ENCODE measurements at regions of chr10 and their contacts with region 1.

Region 1: DNA sequence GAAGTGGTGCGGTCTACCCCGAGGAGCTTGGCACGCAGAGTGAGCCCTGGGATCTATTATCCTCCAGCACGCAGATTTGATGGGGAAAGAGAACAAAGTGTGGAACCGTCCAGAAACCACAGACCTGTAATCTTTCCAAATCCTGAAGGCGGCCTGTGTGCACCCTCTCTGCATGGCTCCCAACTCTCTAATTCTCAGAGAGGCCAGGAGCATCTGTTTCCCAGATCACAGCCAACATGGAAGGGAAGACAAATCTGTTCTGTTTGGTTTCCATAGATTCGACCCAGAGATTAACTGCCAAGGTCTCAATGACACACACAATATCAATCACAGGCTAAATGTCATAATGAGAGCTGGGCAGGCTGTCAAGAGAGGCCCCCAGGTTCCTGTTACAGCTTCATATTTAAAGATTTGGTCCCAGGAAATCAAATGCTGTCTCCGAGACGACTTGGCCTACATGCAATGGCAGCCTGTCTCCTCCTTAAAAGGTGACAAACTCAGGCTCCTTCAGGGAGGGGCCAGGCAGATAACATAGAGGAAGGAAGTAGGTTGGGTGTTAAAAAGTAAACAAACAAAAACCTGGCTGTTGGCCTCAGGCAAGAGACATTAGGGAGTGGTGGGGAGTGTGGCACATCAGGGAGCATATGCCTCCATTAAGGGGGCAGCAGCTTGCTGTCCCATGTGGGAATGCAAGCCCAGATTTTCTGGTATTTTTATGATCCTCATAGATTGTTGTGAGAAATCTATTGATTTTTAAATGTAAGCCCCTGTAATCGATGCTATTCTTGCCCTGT is 48.8 kb upstream of the SAMD8 start:
- DNase-seq: no peak
- H3K4me3 ChIP-seq: no peak overlapping the region
- H3K27ac ChIP-seq: no peak overlapping the region
- H3K27me3 ChIP-seq: no peaks in the 10 kb centered on the region
- CTCF ChIP-seq: no peak

Region 2: DNA sequence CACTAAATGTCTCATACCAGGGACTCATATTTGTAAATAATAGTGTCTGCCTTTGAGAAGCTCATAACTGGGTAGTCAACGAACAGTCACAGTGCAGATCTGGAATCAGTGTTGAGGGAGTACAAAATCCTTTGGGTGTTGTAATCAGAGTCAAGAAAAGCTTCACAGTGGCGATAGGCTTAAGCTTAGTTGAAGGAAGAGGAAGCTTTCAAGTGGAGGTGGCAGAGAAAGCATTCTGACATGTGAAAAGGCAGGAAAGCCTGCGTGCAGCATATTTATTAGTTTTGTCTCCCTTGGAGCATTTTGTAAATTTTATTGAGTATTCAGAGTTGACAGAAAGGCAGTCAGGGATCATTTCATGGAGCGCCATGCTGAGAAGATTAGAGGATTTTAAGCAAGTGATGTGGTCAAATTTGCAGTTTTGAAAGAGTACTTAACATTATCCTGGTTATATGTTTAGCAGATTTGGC is 806.8 kb before region 1 on chr10:
- in situ Hi-C with region 1: loop called (anchors 25 kb)
- DNase-seq: no peak
- H3K4me3 ChIP-seq: no peak overlapping the region
- H3K27ac ChIP-seq: no peak overlapping the region
- H3K27me3 ChIP-seq: no peaks in the 10 kb centered on the region
- CTCF ChIP-seq: no peak